ENCODE measurements at regions of chr4 and their contacts with region 1.

Region 1: GRCh38 chr4:177066746-177067145 is 242.9 kb upstream of the NEIL3 start:
- DNase-seq: no peak
- H3K4me3 ChIP-seq: no peak overlapping the region
- H3K27ac ChIP-seq: no peak overlapping the region
- H3K4me1 ChIP-seq: no peaks in the 10 kb centered on the region
- H3K27me3 ChIP-seq: no peaks in the 10 kb centered on the region
- CTCF ChIP-seq: no peak
- EP300 ChIP-seq: no peak
- POLR2A ChIP-seq: no peak

Region 2: DNA sequence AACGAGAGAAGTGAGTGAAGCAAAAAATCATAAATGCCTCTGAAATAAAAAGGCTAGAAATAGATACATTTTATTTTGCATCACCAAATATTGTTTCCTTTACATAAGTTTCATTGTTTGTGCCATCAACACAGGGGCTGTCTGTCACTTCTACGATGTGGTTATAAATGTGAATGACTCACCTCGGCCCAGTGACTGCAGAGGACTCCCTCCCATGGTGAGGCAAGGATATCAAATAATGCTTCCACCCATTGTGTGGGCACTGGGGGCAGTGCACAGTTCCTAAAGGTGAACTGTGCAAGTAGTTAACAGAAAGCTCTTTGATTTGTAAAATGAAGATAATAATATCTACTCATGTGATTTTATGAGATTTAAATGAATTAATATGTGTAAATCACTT is 12.6 kb after region 1 on chr4:
- intact Hi-C with region 1: loop called in 1 of 4 experiments (anchors 1 kb)
- DNase-seq: no peak
- H3K4me3 ChIP-seq: no peak overlapping the region
- H3K27ac ChIP-seq: no peak overlapping the region
- H3K4me1 ChIP-seq: no peaks in the 10 kb centered on the region
- H3K27me3 ChIP-seq: no peaks in the 10 kb centered on the region
- CTCF ChIP-seq: no peak
- EP300 ChIP-seq: no peak
- POLR2A ChIP-seq: no peak